Mammary epithelial cell (primary cell): ENCODE measurements at regions of chr3 and their contacts with region 1.

Region 1: GRCh38 chr3:157130467-157131251 is 29.3 kb downstream of the CCNL1 start:
- DNase-seq: peak; percentile 91
- H3K4me3 ChIP-seq: no peak overlapping the region
- H3K27ac ChIP-seq: peak overlapping the region; percentile 98
- H3K4me1 ChIP-seq: peaks cover 96% of the 10 kb centered on the region
- H3K27me3 ChIP-seq: no peaks in the 10 kb centered on the region
- CTCF ChIP-seq: peak; percentile 54 to 69

Region 2: DNA sequence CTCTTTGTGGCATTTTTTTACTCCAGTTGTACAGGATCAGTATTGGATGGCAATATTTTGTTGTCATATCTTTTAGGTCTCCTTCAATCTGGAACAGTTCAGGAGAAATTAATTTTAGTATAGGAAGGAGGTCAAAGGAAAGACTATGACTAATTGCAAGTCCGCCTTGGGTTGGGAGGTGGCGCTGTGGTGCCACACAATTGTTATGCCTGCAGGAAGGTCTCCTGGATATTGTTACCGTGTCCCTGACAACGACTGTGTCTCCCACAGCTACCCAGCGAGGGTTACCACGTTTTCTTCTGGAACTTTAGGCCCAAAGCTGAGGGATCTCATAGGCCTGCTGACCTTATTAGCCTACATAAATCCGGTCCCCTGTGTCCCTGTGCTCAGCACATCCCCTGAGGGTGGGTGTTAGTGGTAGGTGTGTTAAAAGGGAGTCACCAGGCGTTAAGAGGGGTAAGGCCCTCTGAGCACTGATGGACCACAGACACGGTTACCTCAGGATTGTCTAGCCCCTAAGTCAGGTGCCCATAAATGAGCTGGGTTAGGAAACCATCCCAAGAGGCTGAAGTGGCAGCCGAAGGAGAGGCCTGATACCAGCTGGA is 978.7 kb before region 1 on chr3:
- CTCF ChIA-PET with region 1: interaction called, 5 read pairs
- dilution Hi-C with region 1: no loop called
- in situ Hi-C with region 1: loop called in 1 of 2 experiments (anchors 25 kb)
- intact Hi-C with region 1: no loop called
- DNase-seq: peak; percentile 50
- H3K4me3 ChIP-seq: no peak overlapping the region
- H3K27ac ChIP-seq: no peak overlapping the region
- H3K4me1 ChIP-seq: no peaks in the 10 kb centered on the region
- H3K27me3 ChIP-seq: no peaks in the 10 kb centered on the region
- CTCF ChIP-seq: peak; percentile 79 to 87

Region 3: DNA sequence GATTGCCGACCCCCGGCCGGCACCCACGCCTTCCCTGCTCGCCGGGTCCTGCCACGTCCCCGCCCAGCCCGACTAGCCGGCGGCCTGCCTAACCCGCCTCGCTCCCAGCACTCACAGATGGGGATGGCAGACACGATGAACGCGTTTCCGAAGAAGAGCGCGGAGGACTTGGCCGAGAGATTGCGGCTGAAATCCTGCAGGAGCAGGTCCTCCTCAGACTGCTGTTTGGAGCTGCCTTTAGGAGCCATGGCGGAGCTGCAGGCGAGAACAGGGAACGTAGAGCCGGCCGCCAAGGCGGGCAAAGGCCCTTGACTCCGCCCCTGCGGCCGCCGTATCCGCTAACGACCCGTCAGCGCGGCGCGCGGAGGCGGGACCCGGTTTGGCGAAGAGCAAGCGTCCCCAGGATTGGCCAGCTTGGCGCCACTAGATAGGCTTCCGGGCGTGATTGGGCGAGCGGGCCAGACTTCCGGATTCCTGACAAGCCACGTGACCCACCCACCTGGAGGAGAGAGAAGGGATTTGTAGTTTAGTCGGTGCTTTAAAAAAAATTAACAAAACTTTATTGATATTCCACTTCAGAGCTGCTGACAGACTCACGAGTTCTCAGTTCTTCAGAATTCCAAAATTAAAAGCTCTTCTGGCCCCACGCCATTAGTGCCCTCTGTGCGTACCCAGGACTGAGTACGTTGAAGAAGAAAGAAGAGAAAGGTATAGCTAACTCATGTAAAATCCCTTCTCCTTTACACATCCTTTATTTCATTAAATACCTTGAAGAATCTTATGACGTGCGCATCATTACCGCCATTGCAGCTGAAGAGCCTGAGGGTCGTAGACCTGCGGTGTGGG is 575.6 kb before region 1 on chr3 and contains the start of gene SSR3:
- CTCF ChIA-PET with region 1: no interaction called
- dilution Hi-C with region 1: no loop called
- in situ Hi-C with region 1: loop called in 1 of 2 experiments (anchors 10 kb)
- intact Hi-C with region 1: no loop called
- DNase-seq: peak; percentile 99
- H3K4me3 ChIP-seq: peak within 1 kb of the TSS; percentile 97 to 99 (median 97)
- H3K27ac ChIP-seq: peak within 1 kb of the TSS; percentile 87
- H3K4me1 ChIP-seq: peaks cover 34% of the 10 kb centered on the region
- H3K27me3 ChIP-seq: no peaks in the 10 kb centered on the region
- CTCF ChIP-seq: peak in 1 of 2 donors; percentile 8
- total RNA-seq, gene SSR3: 375 to 388 TPM

Region 4: DNA sequence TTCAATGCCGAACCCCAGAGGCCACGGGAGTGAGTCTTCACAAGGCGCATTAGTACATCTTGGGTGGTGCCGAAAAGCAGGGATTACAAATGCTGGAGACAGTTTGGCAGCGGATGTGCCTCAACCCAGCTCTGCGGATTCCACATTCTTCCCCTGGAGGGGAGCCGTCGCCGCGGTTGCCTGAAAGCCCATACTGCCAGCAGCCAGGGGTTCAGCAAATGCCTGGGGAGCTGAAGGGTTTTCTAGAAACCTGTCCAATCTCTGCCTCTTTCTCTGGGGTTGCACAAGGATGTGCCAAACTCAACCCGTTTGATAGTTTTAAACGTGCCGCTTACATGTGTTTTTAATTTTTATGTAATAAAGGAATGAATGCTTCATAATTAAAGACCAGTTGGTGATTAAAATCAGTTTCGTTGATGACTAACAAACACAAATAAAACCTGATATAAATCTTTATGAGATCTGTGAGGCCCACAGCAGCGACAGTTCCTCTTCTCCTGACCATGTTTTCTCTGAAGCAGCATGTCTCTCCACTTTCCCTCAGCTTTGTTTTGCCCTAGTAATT is 379.1 kb before region 1 on chr3:
- CTCF ChIA-PET with region 1: no interaction called
- dilution Hi-C with region 1: no loop called
- in situ Hi-C with region 1: no loop called
- intact Hi-C with region 1: loop called (anchors 1 kb)
- DNase-seq: peak; percentile 87
- H3K4me3 ChIP-seq: peak overlapping the region in 1 of 3 experiments; percentile 2
- H3K27ac ChIP-seq: peak overlapping the region; percentile 94
- H3K4me1 ChIP-seq: peaks cover 27% of the 10 kb centered on the region
- H3K27me3 ChIP-seq: no peaks in the 10 kb centered on the region
- CTCF ChIP-seq: peak in 1 of 2 donors; percentile 29

Region 5: GRCh38 chr3:156892701-156893100 is 238.0 kb before region 1 on chr3:
- CTCF ChIA-PET with region 1: no interaction called
- dilution Hi-C with region 1: no loop called
- in situ Hi-C with region 1: no loop called
- intact Hi-C with region 1: loop called (anchors 5 kb)
- DNase-seq: peak; percentile 93
- H3K4me3 ChIP-seq: no peak overlapping the region
- H3K27ac ChIP-seq: no peak overlapping the region
- H3K4me1 ChIP-seq: peaks cover 11% of the 10 kb centered on the region
- H3K27me3 ChIP-seq: no peaks in the 10 kb centered on the region
- CTCF ChIP-seq: no peak

Region 6: DNA sequence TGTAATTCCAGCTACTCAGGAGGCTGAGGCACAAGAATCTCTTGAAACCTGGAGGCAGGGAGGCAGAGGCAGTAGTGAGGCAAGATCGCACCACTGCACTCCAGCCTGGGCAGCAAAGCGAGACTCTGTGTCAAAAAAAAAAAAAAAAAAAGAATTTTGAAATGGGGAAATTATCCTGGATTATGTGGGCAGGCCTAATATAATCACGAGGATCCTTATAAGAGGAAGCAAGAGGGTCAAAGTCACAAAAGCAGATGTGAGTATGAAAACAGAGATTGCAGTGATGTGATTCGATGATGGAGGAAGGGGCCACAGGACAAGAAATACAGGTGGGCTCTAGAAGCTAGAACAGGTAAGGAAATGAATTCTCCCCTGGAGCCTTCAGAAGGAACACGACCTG is 144.9 kb before region 1 on chr3:
- CTCF ChIA-PET with region 1: no interaction called
- dilution Hi-C with region 1: no loop called
- in situ Hi-C with region 1: no loop called
- intact Hi-C with region 1: no loop called
- DNase-seq: no peak
- H3K4me3 ChIP-seq: no peak overlapping the region
- H3K27ac ChIP-seq: no peak overlapping the region
- H3K4me1 ChIP-seq: no peaks in the 10 kb centered on the region
- H3K27me3 ChIP-seq: no peaks in the 10 kb centered on the region
- CTCF ChIP-seq: no peak

Region 7: GRCh38 chr3:157088601-157089454 is 41.8 kb before region 1 on chr3:
- CTCF ChIA-PET with region 1: interaction called, 3 read pairs
- dilution Hi-C with region 1: loop called (anchors 5 kb)
- in situ Hi-C with region 1: loop called (anchors 5 kb)
- intact Hi-C with region 1: loop called (anchors 1 kb)
- DNase-seq: peak; percentile 94
- H3K4me3 ChIP-seq: peak overlapping the region; percentile 35 to 56 (median 54)
- H3K27ac ChIP-seq: peak overlapping the region; percentile 92
- H3K4me1 ChIP-seq: peaks cover 47% of the 10 kb centered on the region
- H3K27me3 ChIP-seq: no peaks in the 10 kb centered on the region
- CTCF ChIP-seq: peak in 1 of 2 donors; percentile 29